ENCODE measurements at regions of chr11 and their contacts with region 1.

Region 1: DNA sequence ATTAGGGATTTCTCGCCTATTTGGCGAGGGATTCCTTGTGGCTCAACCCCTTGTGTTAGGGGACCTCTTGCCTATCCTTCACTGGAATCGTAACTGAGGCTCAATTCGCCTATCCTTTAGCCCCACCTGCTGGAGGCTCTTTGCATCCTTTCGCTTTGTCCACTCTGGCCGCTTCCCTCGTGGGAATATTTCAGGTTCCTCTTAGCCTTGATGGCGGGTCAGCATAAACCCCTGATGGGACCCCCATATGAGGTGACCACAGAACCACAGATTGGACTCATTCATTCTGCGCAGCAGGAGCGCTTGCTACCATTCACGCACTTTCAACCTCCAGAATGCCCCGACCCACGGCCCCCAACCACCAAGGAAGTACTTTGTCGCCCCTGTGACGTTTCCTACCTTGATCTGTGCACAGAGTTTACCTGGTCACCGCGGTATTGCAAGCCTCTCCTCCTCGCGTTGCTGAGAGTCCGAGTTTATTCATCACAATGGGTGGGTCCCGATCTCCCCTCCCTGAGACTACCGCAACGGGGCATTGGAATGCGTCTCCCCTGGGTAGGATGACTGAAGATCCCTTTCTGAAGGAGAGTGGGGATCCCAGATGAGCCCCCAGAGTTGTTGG is at the start of gene OR52N2:
- DNase-seq: peak; percentile 63
- H3K4me3 ChIP-seq: peak within 1 kb of the TSS; percentile 18 to 20
- H3K27ac ChIP-seq: no peak within 1 kb of the TSS
- H3K4me1 ChIP-seq: no peaks in the 10 kb centered on the region
- H3K27me3 ChIP-seq: no peaks in the 10 kb centered on the region
- CTCF ChIP-seq: peak; percentile 41 to 79 (median 68)
- POLR2A ChIP-seq: no peak
- total RNA-seq, gene OR52N2: not detected

Region 2: GRCh38 chr11:5129457-5129877 is 679.1 kb before region 1 on chr11:
- intact Hi-C with region 1: loop called (anchors 5 kb)
- DNase-seq: no peak
- H3K4me3 ChIP-seq: no peak overlapping the region
- H3K27ac ChIP-seq: no peak overlapping the region
- H3K4me1 ChIP-seq: no peaks in the 10 kb centered on the region
- H3K27me3 ChIP-seq: no peaks in the 10 kb centered on the region
- CTCF ChIP-seq: no peak
- POLR2A ChIP-seq: no peak

Region 3: DNA sequence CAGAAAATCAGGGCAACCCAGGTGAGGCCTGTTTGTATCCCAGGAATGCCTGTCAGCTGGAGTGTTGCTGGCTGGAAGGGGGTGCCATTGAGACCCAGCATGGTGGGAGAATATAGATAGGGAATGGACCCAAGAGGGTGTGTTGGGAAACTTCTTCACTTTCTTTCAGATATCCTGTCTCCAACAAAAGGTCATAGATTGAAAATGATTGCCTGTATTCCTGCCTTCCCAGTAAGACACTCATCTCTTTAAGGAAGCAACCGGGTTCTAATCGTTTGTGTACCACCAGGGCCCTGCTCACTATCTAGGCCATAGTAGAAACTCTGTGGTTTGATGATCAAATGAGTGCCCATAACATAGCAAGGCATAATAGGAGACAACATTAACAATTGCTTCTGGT is 367.2 kb before region 1 on chr11 and contains the start of gene OR51I1:
- intact Hi-C with region 1: no loop called
- DNase-seq: no peak
- H3K4me3 ChIP-seq: no peak within 1 kb of the TSS
- H3K27ac ChIP-seq: no peak within 1 kb of the TSS
- H3K4me1 ChIP-seq: no peaks in the 10 kb centered on the region
- H3K27me3 ChIP-seq: no peaks in the 10 kb centered on the region
- CTCF ChIP-seq: no peak
- POLR2A ChIP-seq: no peak
- total RNA-seq, gene OR51I1: 1.1 TPM in 1 of 2 donors, not detected in the other

Region 4: DNA sequence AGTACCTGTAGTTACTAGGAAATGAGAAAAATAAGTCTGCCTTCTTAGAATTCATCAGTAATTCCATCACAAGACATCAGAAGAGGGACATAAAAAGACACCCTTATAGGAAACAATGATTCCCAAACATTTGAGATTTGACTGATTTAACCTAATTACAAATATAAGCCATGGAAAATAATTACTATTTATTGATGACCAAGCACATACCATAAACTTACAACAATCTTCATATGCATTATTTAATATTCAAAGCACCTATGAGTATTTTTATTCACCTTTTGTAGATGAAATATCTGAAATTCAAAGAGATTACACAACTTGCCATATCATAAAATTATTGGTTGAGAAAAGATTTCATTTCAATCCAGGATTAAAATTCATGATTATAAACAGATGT is 334.7 kb before region 1 on chr11:
- intact Hi-C with region 1: loop called (anchors 5 kb)
- DNase-seq: no peak
- H3K4me3 ChIP-seq: no peak overlapping the region
- H3K27ac ChIP-seq: no peak overlapping the region
- H3K4me1 ChIP-seq: no peaks in the 10 kb centered on the region
- H3K27me3 ChIP-seq: no peaks in the 10 kb centered on the region
- CTCF ChIP-seq: no peak
- POLR2A ChIP-seq: no peak